Tibial artery (tissue), 4 donors: ENCODE measurements at regions of chr18 and their contacts with region 1.

Region 1: GRCh38 chr18:65567372-65567771 is 183.4 kb upstream of the CDH7 start:
- DNase-seq: no peak
- H3K4me3 ChIP-seq: no peak overlapping the region
- H3K27ac ChIP-seq: no peak overlapping the region
- H3K4me1 ChIP-seq: no peaks in the 10 kb centered on the region
- H3K27me3 ChIP-seq: no peaks in the 10 kb centered on the region
- CTCF ChIP-seq: no peak

Region 2: GRCh38 chr18:66168685-66169235 is 601.4 kb after region 1 on chr18:
- intact Hi-C with region 1: loop called (anchors 5 kb)
- DNase-seq: no peak
- H3K4me3 ChIP-seq: no peak overlapping the region
- H3K27ac ChIP-seq: no peak overlapping the region
- H3K4me1 ChIP-seq: no peaks in the 10 kb centered on the region
- H3K27me3 ChIP-seq: no peaks in the 10 kb centered on the region
- CTCF ChIP-seq: no peak